OCI-LY7 (cell line): ENCODE measurements at regions of chr7 and their contacts with region 1.

Region 1: DNA sequence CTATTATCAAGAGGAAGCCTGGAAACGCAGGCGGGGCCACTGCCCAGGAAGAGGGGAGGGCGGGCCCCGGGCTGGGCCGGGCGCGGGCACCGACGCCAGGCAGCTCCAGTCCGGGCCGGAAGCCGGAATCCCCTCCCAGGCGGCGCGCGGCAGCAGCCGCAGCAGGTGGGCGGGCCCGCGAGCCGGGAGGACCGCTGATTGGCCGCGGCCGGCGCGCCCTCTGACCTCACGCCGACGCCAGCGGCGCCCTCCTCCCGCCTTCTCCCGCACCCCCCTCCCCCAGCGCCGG is 438 bp downstream of the BCL7B start:
- DNase-seq: peak; percentile 93
- H3K4me3 ChIP-seq: peak overlapping the region; percentile 91
- H3K27ac ChIP-seq: peak overlapping the region; percentile 85
- H3K4me1 ChIP-seq: peaks cover 19% of the 10 kb centered on the region
- CTCF ChIP-seq: no peak

Region 2: DNA sequence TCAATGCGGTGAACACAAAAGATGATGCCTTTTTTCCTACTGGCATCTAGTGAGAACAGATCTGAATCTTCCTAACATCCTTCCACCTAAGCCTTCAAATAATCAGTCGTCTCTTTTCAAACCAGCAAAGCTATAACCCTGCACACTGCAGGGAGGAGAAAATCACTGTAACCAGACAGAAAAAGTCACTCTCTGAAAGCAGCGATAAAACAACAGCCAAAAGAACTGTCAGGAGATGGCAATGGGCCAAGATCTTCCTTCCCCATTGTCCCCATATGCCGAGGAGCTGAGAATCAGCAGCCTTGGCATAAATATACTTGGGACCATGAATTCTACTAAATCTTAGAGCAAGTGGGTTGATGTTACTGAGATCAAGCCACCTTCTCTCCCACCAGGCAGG is 110.4 kb before region 1 on chr7:
- CTCF ChIA-PET with region 1: no interaction called
- POLR2A ChIA-PET with region 1: no interaction called
- intact Hi-C with region 1: no loop called
- DNase-seq: no peak
- H3K4me3 ChIP-seq: no peak overlapping the region
- H3K27ac ChIP-seq: no peak overlapping the region
- H3K4me1 ChIP-seq: no peaks in the 10 kb centered on the region
- CTCF ChIP-seq: no peak

Region 3: DNA sequence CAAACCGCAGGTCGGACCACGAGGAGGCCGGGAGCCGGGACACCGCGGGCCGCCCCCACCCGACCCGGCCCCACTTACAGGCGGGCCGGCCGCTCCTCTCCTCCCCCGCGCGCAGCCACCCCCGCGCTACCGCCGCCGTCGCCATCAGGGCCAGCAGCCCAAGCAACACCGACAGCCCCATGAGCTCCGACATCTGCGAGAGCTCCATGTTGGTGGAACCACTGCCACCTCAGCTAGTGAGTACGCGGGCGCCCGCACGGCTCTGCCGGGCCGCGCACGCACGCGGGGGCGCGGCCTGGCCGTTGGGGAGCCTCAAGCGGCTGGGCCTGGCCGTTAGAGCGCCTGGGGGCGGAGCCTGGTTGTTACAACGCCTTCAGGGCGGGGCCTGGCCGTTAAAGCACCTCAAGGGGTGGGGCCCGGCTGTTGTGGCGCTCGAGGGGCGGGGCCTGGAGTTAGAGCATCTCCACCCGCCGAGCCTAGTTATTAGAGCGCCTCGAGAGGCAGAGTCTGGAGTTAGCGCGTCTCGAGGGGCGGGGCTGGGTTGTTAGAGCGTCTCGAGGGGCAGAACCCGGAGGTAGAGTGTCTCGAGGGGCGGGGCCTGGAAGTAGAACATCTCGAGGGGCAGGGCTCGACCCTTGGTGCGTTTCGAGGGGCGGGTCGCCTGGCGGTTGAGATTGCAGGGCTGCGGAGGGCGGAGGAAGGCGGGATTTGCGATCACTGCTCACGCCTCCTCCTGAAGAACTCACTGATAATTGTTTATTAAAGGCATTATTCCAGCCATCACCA is 21.5 kb after region 1 on chr7 and contains the start of gene TBL2:
- CTCF ChIA-PET with region 1: no interaction called
- POLR2A ChIA-PET with region 1: interaction called, 4 read pairs
- intact Hi-C with region 1: loop called (anchors 1 kb)
- DNase-seq: peak; percentile 100
- H3K4me3 ChIP-seq: peak within 1 kb of the TSS; percentile 96
- H3K27ac ChIP-seq: peak within 1 kb of the TSS; percentile 82
- H3K4me1 ChIP-seq: peaks cover 26% of the 10 kb centered on the region
- CTCF ChIP-seq: 0 out of 2 replicates have a peak, but pooled peaks have one; percentile 25
- total RNA-seq, gene TBL2: 36.9 and 39.8 TPM in 2 replicates